Right ventricle myocardium superior (tissue), 1 donor: ENCODE measurements at regions of chr2 and their contacts with region 1.

Region 1: GRCh38 chr2:68238955-68239822 is 13.1 kb downstream of the PPP3R1 start:
- DNase-seq: no peak
- ATAC-seq: peak; percentile 38

Region 2: GRCh38 chr2:68196120-68196716 is 43.0 kb before region 1 on chr2:
- intact Hi-C with region 1: loop called (anchors 5 kb)
- DNase-seq: no peak
- ATAC-seq: peak; percentile 56

Region 3: GRCh38 chr2:68403199-68403644 is 164.0 kb after region 1 on chr2:
- intact Hi-C with region 1: no loop called
- DNase-seq: no peak
- ATAC-seq: peak; percentile 56